Prostate gland (tissue), 2 donors: ENCODE measurements at regions of chr7 and their contacts with region 1.

Region 1: GRCh38 chr7:150756858-150757257 is 19.6 kb downstream of the GIMAP5 start:
- DNase-seq: no peak
- H3K4me3 ChIP-seq: no peak overlapping the region
- H3K27ac ChIP-seq: no peak overlapping the region
- H3K4me1 ChIP-seq: no peaks in the 10 kb centered on the region
- H3K27me3 ChIP-seq: no peaks in the 10 kb centered on the region
- CTCF ChIP-seq: peak in 2 of 4 experiments; percentile 57 to 58
- POLR2A ChIP-seq: no peak

Region 2: GRCh38 chr7:150448789-150449147 is 308.1 kb before region 1 on chr7:
- intact Hi-C with region 1: loop called (anchors 2 kb)
- DNase-seq: peak; percentile 55
- H3K4me3 ChIP-seq: no peak overlapping the region
- H3K27ac ChIP-seq: no peak overlapping the region
- H3K4me1 ChIP-seq: no peaks in the 10 kb centered on the region
- H3K27me3 ChIP-seq: no peaks in the 10 kb centered on the region
- CTCF ChIP-seq: peak; percentile 33 to 87 (median 81)
- POLR2A ChIP-seq: no peak